PC-3 (cell line): ENCODE measurements at regions of chr15 and their contacts with region 1.

Region 1: GRCh38 chr15:63610200-63610841 is 13.1 kb downstream of the FBXL22 start:
- DNase-seq: peak; percentile 85
- ATAC-seq: peak; percentile 86
- H3K4me3 ChIP-seq: no peak overlapping the region
- H3K27ac ChIP-seq: peak overlapping the region; percentile 49
- H3K4me1 ChIP-seq: peaks cover 19% of the 10 kb centered on the region
- H3K27me3 ChIP-seq: no peaks in the 10 kb centered on the region
- CTCF ChIP-seq: peak; percentile 83

Region 2: DNA sequence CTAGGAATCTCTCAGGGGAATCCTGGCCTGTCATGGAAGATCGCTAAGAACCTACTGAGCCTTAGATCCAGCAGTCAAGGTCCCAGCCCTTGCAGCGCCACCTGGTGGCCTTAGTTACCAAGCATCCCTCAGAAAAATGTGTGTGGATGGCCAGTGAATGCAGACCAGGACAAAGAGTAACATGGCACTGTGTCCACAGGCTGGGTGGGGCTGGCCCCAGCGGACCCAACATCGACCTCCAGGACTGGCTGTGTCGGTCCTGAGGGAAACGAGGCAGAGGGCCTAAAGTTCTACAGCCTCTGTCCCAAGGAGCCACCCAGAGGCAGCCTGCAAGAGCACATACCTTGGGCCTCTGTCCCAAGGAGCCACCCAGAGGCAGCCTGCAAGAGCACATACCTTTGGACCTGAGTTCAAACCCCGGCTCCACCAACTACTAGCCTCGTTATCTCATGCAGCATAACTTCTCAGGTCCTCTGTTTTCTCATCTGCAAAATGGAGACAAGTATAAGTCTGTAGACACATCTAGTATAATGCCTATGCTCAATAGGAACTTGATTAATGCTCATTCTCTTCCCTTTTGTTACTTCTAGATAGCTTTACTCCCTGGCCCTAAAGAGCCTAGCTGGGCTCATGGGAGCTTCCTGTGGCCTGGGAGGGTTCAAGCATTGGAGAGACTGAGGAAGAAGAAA is 280.9 kb after region 1 on chr15:
- CTCF ChIA-PET with region 1: no interaction called
- POLR2A ChIA-PET with region 1: no interaction called
- intact Hi-C with region 1: loop called (anchors 5 kb)
- DNase-seq: peak; percentile 81
- ATAC-seq: peak; percentile 93
- H3K4me3 ChIP-seq: no peak overlapping the region
- H3K27ac ChIP-seq: no peak overlapping the region
- H3K4me1 ChIP-seq: 0 out of 2 replicates have a peak, but pooled peaks cover under 1% of the 10 kb centered on the region
- H3K27me3 ChIP-seq: no peaks in the 10 kb centered on the region
- CTCF ChIP-seq: peak; percentile 86

Region 3: GRCh38 chr15:64024172-64025050 is 414.1 kb after region 1 on chr15:
- CTCF ChIA-PET with region 1: no interaction called
- POLR2A ChIA-PET with region 1: no interaction called
- intact Hi-C with region 1: no loop called
- DNase-seq: no peak
- ATAC-seq: no peak
- H3K4me3 ChIP-seq: no peak overlapping the region
- H3K27ac ChIP-seq: no peak overlapping the region
- H3K4me1 ChIP-seq: peaks cover 18% of the 10 kb centered on the region
- H3K27me3 ChIP-seq: no peaks in the 10 kb centered on the region
- CTCF ChIP-seq: no peak

Region 4: DNA sequence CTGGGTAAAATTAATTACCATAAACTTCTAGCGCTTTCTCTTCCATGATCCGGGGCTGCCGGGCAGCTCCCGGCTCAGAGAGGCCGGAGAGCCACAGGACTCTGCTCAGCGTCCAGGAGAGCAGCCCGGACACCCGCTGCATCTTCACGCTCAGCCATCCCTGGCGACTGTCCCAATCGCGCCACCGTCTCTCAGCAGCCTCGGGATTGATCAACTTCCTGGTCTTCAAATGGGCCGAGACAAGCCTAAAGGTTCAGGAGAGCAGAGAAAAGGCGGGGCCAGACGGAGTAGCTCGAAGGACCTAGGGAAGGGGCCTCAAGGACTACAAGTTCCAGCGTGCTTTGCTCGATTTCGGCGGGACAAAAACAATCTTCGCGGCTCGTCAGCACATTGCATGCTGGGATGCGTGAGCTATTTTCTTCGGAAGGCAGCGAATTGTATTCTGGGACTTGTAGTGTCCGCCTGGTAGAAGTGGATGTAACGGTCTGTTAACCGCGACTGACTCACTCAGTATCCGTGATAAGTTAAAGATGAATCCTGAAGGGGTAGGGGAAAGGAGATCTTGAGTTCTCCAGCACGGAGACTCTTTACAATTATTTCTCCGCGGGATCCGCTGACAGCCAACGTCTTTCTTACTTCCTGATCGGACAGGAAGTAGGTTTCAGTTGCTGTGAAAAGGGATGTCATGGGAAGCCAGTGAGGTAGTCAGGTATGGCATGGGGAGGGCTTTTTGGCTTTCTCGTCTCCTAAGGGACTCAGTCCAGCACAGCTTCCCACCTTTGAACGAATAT is 483.5 kb after region 1 on chr15 and contains the start of gene CIAO2A:
- CTCF ChIA-PET with region 1: no interaction called
- POLR2A ChIA-PET with region 1: interaction called, 10 read pairs
- intact Hi-C with region 1: no loop called
- DNase-seq: peak; percentile 97
- ATAC-seq: peak; percentile 82
- H3K4me3 ChIP-seq: peak within 1 kb of the TSS; percentile 90
- H3K27ac ChIP-seq: peak within 1 kb of the TSS; percentile 49
- H3K4me1 ChIP-seq: peaks cover 28% of the 10 kb centered on the region
- H3K27me3 ChIP-seq: no peaks in the 10 kb centered on the region
- CTCF ChIP-seq: no peak
- total RNA-seq, gene CIAO2A: 83.7 and 92.4 TPM in 2 replicates